ENCODE measurements at regions of chr2 and their contacts with region 1.

Region 1: GRCh38 chr2:3558205-3559014 is at the start of gene RNASEH1:
- DNase-seq: peak; percentile 99
- ATAC-seq: peak; percentile 98 to 99 (median 98)
- H3K4me3 ChIP-seq: peak within 1 kb of the TSS; percentile 97
- H3K27ac ChIP-seq: peak within 1 kb of the TSS; percentile 97
- H3K4me1 ChIP-seq: peaks cover 14% of the 10 kb centered on the region
- H3K27me3 ChIP-seq: no peaks in the 10 kb centered on the region
- CTCF ChIP-seq: no peak
- total RNA-seq, gene RNASEH1: 15.6 to 32.4 (median 20.9) TPM

Region 2: DNA sequence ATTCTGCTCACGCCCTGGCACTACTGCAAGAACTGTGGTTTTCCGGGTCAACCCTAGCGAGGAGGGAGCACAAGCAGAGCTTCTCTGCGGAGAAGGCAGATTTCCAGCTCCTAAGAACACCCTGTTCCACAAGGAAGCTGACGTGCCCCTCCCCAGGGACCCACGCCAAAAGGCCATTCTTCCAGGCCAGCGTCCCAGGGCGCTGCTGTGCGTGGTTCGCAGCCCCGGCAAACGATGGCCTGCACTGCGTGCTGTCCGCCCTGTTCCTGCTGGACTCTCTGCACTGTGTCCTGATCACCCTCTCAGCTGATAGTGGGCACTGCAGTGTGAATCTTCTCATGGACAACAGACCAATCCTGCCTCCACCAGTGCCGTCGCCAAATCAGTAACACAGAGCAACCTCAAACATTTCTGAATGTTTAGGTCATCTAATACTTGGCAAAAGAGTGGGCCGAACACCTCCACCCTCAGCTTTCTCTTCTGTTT is 88.2 kb before region 1 on chr2:
- intact Hi-C with region 1: loop called in 1 of 2 experiments (anchors 5 kb)
- DNase-seq: peak; percentile 84 to 92
- ATAC-seq: peak; percentile 60 to 85 (median 75)
- H3K4me3 ChIP-seq: peak overlapping the region; percentile 42
- H3K27ac ChIP-seq: peak overlapping the region; percentile 95
- H3K4me1 ChIP-seq: peaks cover 50% of the 10 kb centered on the region
- H3K27me3 ChIP-seq: no peaks in the 10 kb centered on the region
- CTCF ChIP-seq: no peak

Region 3: DNA sequence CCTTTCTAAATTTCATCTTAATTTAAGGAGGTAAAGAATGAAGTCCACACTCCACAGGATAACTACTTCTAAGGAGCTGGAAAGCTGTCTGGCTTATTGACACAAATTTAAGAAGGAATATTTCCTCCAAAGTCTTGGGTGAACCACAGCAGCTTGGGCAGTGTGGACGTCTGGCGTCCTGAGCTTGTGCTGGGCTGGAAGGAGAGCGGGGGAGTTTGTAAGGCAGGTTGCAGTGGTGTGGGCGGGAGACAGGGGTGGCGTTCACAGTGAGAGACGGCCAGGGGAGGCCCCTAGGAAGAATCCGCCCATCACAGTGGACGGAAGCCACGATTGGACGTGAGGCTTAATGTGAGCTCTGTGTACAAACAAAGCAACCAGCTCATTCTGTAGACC is 64.8 kb before region 1 on chr2:
- intact Hi-C with region 1: no loop called
- DNase-seq: no peak
- ATAC-seq: peak in 3 of 4 donors; percentile 25 to 39 (median 33)
- H3K4me3 ChIP-seq: no peak overlapping the region
- H3K27ac ChIP-seq: no peak overlapping the region
- H3K4me1 ChIP-seq: no peaks in the 10 kb centered on the region
- H3K27me3 ChIP-seq: no peaks in the 10 kb centered on the region
- CTCF ChIP-seq: no peak

Region 4: DNA sequence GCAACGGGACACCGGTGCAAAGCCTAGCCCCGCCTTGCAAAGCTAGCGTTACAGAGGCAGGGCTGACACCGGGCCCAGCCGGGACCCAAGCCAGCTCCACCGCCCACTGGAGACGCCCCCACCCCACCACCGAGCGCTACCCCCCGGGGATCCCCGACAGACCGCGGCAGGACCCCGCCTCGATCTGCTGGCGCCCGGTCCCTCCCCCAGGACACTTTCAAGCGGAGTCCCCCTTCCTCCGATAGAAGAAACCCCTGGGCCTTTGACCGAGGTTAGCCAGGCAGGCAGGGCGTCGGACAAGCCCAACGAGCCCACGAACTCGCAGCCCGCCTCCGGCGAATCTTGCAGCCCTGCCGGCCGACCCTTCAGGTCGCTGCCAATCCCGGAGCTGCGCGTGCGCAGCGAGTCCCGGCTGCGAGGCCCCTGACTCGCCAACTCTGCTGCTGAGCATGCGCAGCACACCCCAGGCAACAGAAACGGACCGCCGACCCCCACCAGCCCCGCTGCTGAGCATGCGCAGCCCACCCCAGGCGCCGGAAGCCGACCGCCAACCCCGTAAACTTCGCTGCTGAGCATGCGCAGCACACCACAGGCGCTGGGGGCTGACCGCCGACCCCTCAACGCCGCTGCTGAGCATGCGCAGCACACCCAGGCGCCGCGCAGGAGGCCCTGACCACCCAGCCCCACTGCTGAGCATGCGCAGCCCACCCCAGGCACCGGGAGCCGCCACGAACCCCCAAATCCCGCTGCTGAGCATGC is 39.7 kb before region 1 on chr2:
- intact Hi-C with region 1: loop called in 1 of 2 experiments (anchors 5 kb)
- DNase-seq: peak; percentile 99 to 100
- ATAC-seq: peak; percentile 95 to 96 (median 96)
- H3K4me3 ChIP-seq: peak overlapping the region; percentile 92
- H3K27ac ChIP-seq: peak overlapping the region; percentile 99
- H3K4me1 ChIP-seq: peaks cover 29% of the 10 kb centered on the region
- H3K27me3 ChIP-seq: no peaks in the 10 kb centered on the region
- CTCF ChIP-seq: no peak

Region 5: GRCh38 chr2:3536682-3537632 is 21.5 kb before region 1 on chr2:
- intact Hi-C with region 1: loop called in 1 of 2 experiments (anchors 1 kb)
- DNase-seq: peak; percentile 55 to 71
- ATAC-seq: peak; percentile 43 to 82 (median 70)
- H3K4me3 ChIP-seq: peak overlapping the region; percentile 59
- H3K27ac ChIP-seq: peak overlapping the region; percentile 89
- H3K4me1 ChIP-seq: peaks cover 4% of the 10 kb centered on the region
- H3K27me3 ChIP-seq: no peaks in the 10 kb centered on the region
- CTCF ChIP-seq: peak; percentile 36

Region 6: DNA sequence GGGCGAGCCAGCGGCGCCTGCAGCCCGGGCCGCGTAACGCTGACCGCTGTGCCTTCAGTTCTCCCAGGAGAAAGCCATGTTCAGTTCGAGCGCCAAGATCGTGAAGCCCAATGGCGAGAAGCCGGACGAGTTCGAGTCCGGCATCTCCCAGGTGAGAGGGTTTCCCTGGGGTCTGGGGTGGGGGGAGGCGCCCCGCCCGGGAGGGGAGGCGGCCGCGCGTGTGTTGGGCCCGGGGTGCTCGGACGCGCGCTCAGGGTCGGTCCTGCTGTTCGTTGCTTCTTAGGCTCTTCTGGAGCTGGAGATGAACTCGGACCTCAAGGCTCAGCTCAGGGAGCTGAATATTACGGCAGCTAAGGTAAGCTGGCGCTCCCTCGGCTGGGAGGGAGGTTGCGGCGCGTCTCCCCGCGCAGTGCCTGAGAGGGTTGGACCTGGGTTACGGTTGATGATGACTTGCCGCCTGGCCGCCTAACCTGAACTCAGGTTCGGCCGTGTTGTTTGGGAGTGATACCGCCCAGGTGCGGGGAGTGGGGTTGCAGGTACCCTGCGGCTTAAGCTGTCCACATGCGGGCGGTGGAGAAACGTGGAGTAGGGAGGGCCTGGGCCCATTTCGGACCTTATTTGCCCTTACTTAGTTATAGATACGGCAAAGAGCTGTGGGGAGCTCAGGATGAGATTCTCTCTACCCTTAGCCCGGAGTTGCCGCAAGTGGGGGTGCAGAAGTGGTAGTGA is 17.3 kb after region 1 on chr2:
- intact Hi-C with region 1: loop called (anchors 2 kb)
- DNase-seq: peak in 1 of 2 donors; percentile 23
- ATAC-seq: peak; percentile 25 to 54 (median 42)
- H3K4me3 ChIP-seq: peak overlapping the region; percentile 92
- H3K27ac ChIP-seq: peak overlapping the region; percentile 84
- H3K4me1 ChIP-seq: peaks cover 27% of the 10 kb centered on the region
- H3K27me3 ChIP-seq: no peaks in the 10 kb centered on the region
- CTCF ChIP-seq: no peak